ENCODE measurements at regions of chr4 and their contacts with region 1.

Region 1: DNA sequence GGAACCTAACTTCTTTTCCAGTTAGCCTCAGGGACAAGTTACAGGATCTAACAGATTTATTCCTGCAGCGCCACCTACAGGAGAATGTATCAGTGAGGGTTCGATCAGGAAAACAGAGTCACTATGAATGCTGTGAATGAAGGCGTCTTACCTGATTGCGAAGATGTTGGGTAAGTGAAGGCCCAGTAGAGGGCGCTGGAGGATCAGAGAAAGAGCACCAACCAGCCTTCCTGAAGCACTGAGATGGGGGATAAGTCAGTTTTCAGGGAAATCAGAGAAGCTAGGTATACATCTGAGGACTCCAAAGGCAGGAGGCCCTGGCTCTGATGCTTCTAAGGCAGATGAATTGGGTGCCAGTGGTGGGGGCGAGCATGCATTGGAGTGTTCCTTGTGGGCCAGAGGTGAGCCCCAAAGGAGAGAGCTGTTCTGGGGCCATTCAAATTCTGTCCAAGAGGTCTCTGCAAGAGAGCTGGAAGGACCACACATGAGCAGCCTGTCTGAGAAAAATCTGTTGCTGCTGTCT is 169.9 kb upstream of the AADAT start:
- DNase-seq: peak; percentile 74

Region 2: GRCh38 chr4:170138580-170139194 is 121.0 kb before region 1 on chr4:
- CTCF ChIA-PET with region 1: interaction called, 19 read pairs
- POLR2A ChIA-PET with region 1: no interaction called
- DNase-seq: peak; percentile 84

Region 3: DNA sequence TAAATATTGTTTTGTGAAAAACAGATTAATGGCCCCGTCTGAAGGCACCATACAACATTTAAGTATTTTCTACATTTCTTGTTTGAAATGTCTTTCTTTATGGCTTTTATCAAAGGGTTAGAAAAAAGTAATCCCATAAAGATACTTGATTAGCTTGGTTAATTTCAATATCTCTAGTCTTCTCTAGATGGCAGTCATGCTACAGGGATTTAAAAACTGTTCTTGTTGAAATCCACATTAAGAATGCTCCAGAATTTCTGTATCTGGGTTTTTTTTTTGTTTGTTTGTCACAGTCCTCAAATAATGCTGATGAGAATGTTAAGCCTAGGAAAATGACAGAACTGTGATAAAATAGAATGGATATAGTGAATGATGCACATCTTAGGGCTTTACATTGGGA is 60.9 kb before region 1 on chr4:
- CTCF ChIA-PET with region 1: no interaction called
- POLR2A ChIA-PET with region 1: no interaction called
- DNase-seq: no peak

Region 4: DNA sequence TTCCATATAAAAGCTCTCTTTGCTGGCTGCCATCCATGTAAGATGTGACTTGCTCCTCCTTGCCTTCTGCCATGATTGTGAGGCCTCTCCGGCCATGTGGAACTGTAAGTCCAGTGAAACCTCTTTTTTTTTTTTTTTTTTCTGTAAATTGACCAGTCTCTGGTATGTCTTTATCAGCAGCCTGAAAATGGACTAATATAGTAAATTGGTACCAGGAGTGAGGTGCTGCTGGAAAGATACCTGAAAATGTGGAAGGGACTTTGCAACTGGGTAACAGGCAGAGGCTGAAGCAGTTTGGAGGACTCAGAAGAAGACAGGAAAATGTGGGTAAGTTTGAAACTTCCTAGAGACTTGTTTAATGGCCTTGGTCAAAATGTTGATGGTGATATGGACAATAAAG is 45.6 kb before region 1 on chr4:
- CTCF ChIA-PET with region 1: no interaction called
- POLR2A ChIA-PET with region 1: no interaction called
- DNase-seq: no peak

Region 5: DNA sequence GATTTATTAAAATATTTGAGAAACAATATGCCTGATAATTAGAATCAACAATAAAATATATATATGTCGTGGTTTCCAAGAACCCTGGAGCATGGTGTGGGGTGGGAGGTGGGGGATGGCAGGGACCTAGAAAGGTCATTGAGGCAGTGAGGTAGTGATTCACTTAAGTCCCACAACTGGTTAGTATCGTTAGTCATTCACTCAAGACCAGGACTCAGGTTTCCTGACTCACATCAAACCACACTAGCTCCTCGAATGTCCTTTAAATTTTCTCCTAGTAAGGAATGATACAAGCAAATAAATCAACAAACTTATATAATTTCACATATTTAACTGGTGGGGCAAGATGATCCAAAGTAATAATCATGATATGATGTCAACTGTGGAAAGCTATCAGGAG is 11.1 kb before region 1 on chr4:
- CTCF ChIA-PET with region 1: interaction called, 19 read pairs
- POLR2A ChIA-PET with region 1: no interaction called
- DNase-seq: no peak

Region 6: DNA sequence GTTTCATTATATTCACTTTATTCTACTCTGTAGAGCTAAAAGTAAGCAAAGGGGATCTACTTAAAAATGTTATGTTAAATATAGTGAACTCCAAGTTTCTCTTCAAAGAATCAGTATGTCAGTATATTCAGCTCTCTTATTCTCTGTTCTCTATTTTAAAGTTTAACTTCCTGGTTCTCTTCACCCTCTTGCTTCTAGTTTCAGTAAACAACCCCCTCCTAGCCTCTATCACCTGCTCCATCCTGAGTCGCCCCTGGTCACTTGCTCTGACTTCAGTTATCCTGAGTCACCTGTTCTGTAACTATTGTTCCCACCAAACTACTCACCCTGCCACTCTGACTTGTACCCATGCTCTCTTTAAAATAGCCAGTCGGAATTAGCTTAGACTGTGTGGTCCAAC is 10.9 kb after region 1 on chr4:
- CTCF ChIA-PET with region 1: interaction called, 12 read pairs
- POLR2A ChIA-PET with region 1: no interaction called
- DNase-seq: no peak

Region 7: GRCh38 chr4:170853422-170854021 is 593.8 kb after region 1 on chr4:
- CTCF ChIA-PET with region 1: interaction called, 16 read pairs
- POLR2A ChIA-PET with region 1: no interaction called
- DNase-seq: peak; percentile 62